Ascending aorta (tissue), 2 donors: ENCODE measurements at regions of chr21 and their contacts with region 1.

Region 1: DNA sequence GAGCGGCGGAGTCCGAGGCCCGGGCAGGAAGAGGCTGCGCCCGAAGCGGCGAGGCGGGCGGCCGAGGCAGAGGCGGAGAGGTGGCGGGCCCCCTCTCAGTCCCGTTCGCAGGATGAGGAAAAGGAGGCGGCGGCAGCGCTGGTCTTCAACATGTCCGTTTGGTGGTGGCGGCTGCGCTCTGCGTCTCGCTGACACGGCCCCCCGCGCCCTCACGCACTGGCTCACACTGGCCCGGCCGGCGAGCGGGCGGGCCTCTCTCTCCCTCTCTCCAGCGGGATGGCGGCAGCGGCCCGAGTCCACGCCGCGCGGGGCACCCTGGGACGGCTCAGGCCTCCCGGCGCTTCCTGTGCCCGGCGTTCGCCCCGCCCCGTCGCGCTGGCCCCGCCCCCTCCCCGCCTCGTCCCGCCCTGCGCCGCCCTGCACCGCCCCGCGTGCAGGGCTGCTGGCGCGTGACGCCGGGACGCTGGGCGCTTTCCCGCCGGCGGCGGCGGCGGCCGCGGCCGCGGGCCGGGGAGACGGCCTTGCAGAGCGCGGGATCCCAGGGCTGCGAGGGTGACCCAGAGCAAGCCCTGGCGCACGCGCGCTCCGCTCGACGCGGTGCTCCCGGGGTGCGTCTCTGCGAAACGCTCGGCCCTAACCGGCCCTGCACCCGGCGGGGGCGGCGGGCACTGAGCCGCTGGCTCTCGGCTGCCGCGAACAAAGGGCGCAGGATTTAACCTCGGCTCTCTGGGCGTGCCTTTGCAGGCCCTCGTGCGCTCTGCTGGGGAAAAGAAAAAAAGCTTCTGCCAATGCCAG is at the start of gene SCAF4:
- DNase-seq: peak; percentile 60 to 93
- H3K4me3 ChIP-seq: peak within 1 kb of the TSS; percentile 93 to 99
- H3K27ac ChIP-seq: peak within 1 kb of the TSS; percentile 96 to 98
- H3K4me1 ChIP-seq: peaks cover 4 to 31% of the 10 kb centered on the region in 2 donors
- H3K27me3 ChIP-seq: no peaks in the 10 kb centered on the region
- CTCF ChIP-seq: no peak
- total RNA-seq, gene SCAF4: 31.2 TPM

Region 2: GRCh38 chr21:31198575-31198974 is 533.4 kb before region 1 on chr21:
- intact Hi-C with region 1: loop called (anchors 10 kb)
- DNase-seq: no peak
- H3K4me3 ChIP-seq: no peak overlapping the region
- H3K27ac ChIP-seq: no peak overlapping the region
- H3K4me1 ChIP-seq: no peaks in the 10 kb centered on the region
- H3K27me3 ChIP-seq: no peaks in the 10 kb centered on the region
- CTCF ChIP-seq: peak; percentile 32 to 52 (median 49)

Region 3: GRCh38 chr21:31710586-31710985 is 21.4 kb before region 1 on chr21:
- intact Hi-C with region 1: loop called (anchors 2 kb)
- DNase-seq: no peak
- H3K4me3 ChIP-seq: no peak overlapping the region
- H3K27ac ChIP-seq: peak overlapping the region; percentile 1 to 18
- H3K4me1 ChIP-seq: peaks cover 6 to 41% of the 10 kb centered on the region in 2 donors
- H3K27me3 ChIP-seq: no peaks in the 10 kb centered on the region
- CTCF ChIP-seq: no peak

Region 4: GRCh38 chr21:31750843-31751242 is 18.8 kb after region 1 on chr21:
- intact Hi-C with region 1: no loop called
- DNase-seq: no peak
- H3K4me3 ChIP-seq: no peak overlapping the region
- H3K27ac ChIP-seq: no peak overlapping the region
- H3K4me1 ChIP-seq: no peaks in the 10 kb centered on the region
- H3K27me3 ChIP-seq: no peaks in the 10 kb centered on the region
- CTCF ChIP-seq: no peak

Region 5: GRCh38 chr21:32278518-32279376 is 546.7 kb after region 1 on chr21 and contains the start of gene MIS18A:
- intact Hi-C with region 1: loop called (anchors 1 kb)
- DNase-seq: peak; percentile 80 to 98
- H3K4me3 ChIP-seq: peak within 1 kb of the TSS; percentile 69 to 77
- H3K27ac ChIP-seq: peak within 1 kb of the TSS; percentile 44 to 65
- H3K4me1 ChIP-seq: peaks cover 9 to 13% of the 10 kb centered on the region in 2 donors
- H3K27me3 ChIP-seq: no peaks in the 10 kb centered on the region
- CTCF ChIP-seq: peak in 1 of 3 experiments; percentile 6
- total RNA-seq, gene MIS18A: 0.64 TPM

Region 6: GRCh38 chr21:32770871-32771523 is 1039.0 kb after region 1 on chr21:
- intact Hi-C with region 1: loop called (anchors 5 kb)
- DNase-seq: peak in 1 of 2 donors; percentile 77
- H3K4me3 ChIP-seq: peak overlapping the region; percentile 75 to 93
- H3K27ac ChIP-seq: peak overlapping the region; percentile 77 to 93
- H3K4me1 ChIP-seq: peaks cover 3 to 19% of the 10 kb centered on the region in 2 donors
- H3K27me3 ChIP-seq: no peaks in the 10 kb centered on the region
- CTCF ChIP-seq: peak in 1 of 3 experiments; percentile 5